Posterior cingulate gyrus (tissue), 11 donors: ENCODE measurements at regions of chr9 and their contacts with region 1.

Region 1: GRCh38 chr9:108933718-108934322 is at the start of gene ELP1:
- DNase-seq: peak; percentile 88 to 99 (median 94)

Region 2: DNA sequence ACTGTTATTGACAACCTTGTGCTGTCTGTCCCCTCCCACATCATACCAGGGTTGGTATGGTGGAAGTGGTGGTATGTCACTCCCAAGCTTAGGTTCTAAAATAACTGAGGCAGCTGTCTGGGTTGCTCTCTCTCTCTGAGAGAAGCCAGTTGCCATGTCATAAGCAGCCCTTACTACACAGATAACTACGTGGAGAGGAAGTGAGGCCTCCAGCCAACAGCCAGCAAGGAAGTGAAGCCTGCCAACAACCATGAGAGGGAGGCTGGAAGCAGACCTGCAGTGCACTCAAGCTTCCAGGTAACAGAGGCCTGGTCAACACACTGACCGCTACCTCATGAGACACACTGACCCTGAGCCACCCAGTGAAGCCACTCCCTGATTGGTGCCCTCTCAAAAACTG is 60.9 kb after region 1 on chr9:
- intact Hi-C with region 1: no loop called
- DNase-seq: no peak

Region 3: GRCh38 chr9:109012876-109013678 is 79.3 kb after region 1 on chr9 and contains the start of gene CTNNAL1:
- intact Hi-C with region 1: loop called (anchors 1 kb)
- DNase-seq: peak; percentile 80 to 98 (median 88)

Region 4: GRCh38 chr9:109098171-109098959 is 164.5 kb after region 1 on chr9:
- intact Hi-C with region 1: no loop called
- DNase-seq: peak in 3 of 10 donors; percentile 12 to 29 (median 25)